PC-9 (cell line): ENCODE measurements at regions of chr6 and their contacts with region 1.

Region 1: GRCh38 chr6:8983188-8983688 is 547.9 kb upstream of the SLC35B3 start:
- DNase-seq: peak in 1 of 2 experiments; percentile 76
- H3K4me3 ChIP-seq: no peak overlapping the region
- H3K27ac ChIP-seq: no peak overlapping the region
- H3K4me1 ChIP-seq: no peaks in the 10 kb centered on the region
- H3K27me3 ChIP-seq: no peaks in the 10 kb centered on the region
- CTCF ChIP-seq: peak; percentile 86

Region 2: GRCh38 chr6:8707956-8708772 is 275.1 kb before region 1 on chr6:
- CTCF ChIA-PET with region 1: interaction called, 4 read pairs
- POLR2A ChIA-PET with region 1: no interaction called
- intact Hi-C with region 1: loop called (anchors 1 kb)
- DNase-seq: peak in 1 of 2 experiments; percentile 56
- H3K4me3 ChIP-seq: no peak overlapping the region
- H3K27ac ChIP-seq: no peak overlapping the region
- H3K4me1 ChIP-seq: no peaks in the 10 kb centered on the region
- H3K27me3 ChIP-seq: no peaks in the 10 kb centered on the region
- CTCF ChIP-seq: no peak; the same call in 1 of the 2 replicates

Region 3: DNA sequence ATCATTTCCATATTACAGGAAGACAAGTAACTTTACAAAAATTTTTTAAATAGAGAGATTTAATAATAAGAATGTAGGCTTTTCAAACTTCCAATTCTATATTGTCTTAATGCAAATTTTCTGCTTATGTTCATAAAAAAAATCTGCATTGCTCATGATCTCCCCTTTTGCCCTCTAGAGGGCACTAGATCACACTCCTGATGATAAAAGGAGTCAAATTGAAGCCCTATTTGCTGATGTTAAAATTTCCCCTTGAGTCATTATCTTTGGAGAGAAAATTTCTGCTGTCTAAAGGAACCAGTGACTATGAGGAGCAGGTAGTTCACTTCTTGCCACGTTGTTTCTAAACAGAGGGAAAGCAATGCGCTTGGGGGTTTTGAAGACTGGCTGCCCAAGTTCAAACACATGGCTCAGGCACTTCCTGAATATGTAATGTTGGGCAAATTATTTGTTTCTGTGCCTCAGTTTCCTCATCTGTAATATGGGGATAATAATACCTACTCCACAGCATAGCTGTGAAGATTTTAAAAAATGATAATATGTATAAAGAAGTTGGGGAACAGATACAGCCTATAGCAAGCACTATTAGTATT is 557.4 kb after region 1 on chr6:
- CTCF ChIA-PET with region 1: no interaction called
- POLR2A ChIA-PET with region 1: no interaction called
- intact Hi-C with region 1: loop called (anchors 5 kb)
- DNase-seq: peak; percentile 22 to 38
- H3K4me3 ChIP-seq: no peak overlapping the region
- H3K27ac ChIP-seq: no peak overlapping the region
- H3K4me1 ChIP-seq: no peaks in the 10 kb centered on the region
- H3K27me3 ChIP-seq: no peaks in the 10 kb centered on the region
- CTCF ChIP-seq: peak; percentile 73

Region 4: GRCh38 chr6:10030942-10031537 is 1047.8 kb after region 1 on chr6:
- CTCF ChIA-PET with region 1: no interaction called
- POLR2A ChIA-PET with region 1: no interaction called
- intact Hi-C with region 1: loop called (anchors 5 kb)
- DNase-seq: no peak
- H3K4me3 ChIP-seq: no peak overlapping the region
- H3K27ac ChIP-seq: no peak overlapping the region
- H3K4me1 ChIP-seq: peaks cover 28% of the 10 kb centered on the region
- H3K27me3 ChIP-seq: no peaks in the 10 kb centered on the region
- CTCF ChIP-seq: peak; percentile 58